ENCODE measurements at regions of chr5 and their contacts with region 1.

Region 1: DNA sequence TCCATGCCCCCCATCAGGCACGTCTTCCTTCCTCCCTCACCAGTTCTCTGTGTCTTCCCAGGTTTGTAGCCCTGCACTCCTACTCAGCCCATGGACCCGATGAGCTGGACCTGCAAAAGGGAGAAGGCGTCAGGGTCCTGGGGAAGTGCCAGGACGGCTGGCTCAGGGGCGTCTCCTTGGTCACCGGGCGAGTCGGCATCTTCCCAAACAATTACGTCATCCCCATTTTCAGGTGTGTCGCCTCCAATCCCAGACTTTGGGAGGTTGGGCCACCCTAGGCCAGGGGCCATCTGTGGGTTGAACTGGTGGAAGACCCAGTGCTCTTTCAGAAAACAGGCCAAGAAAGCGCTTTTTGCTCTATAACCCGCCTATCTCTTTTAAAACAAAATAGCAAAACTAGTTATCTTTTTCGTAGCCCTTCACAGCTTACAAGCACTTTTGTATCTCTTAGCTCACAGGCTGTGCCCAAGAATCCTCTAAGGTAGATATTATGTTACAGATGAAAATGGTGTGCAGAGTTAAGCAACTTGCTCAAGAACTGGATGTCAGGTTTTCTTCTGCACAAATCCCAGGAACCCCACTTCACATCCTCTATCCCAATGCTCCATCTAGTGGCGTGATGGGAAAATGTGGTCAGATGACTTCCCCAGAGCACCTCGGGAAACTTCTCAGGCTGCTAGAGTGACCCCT is 56.2 kb downstream of the PLAC8L1 start:
- DNase-seq: peak in 4 of 6 donors; percentile 27 to 63 (median 42)
- ATAC-seq: peak; percentile 66 to 90 (median 83)
- H3K4me3 ChIP-seq: no peak overlapping the region
- H3K27ac ChIP-seq: no peak overlapping the region
- H3K4me1 ChIP-seq: no peaks in the 10 kb centered on the region
- H3K27me3 ChIP-seq: no peaks in the 10 kb centered on the region
- CTCF ChIP-seq: peak; percentile 27 to 51 (median 43)

Region 2: GRCh38 chr5:145903113-145903512 is 146.0 kb before region 1 on chr5:
- intact Hi-C with region 1: loop called in 1 of 3 experiments (anchors 10 kb)
- DNase-seq: no peak
- ATAC-seq: no peak
- H3K4me3 ChIP-seq: no peak overlapping the region
- H3K27ac ChIP-seq: no peak overlapping the region
- H3K4me1 ChIP-seq: no peaks in the 10 kb centered on the region
- H3K27me3 ChIP-seq: no peaks in the 10 kb centered on the region
- CTCF ChIP-seq: peak in 2 of 4 donors; percentile 14 to 20

Region 3: DNA sequence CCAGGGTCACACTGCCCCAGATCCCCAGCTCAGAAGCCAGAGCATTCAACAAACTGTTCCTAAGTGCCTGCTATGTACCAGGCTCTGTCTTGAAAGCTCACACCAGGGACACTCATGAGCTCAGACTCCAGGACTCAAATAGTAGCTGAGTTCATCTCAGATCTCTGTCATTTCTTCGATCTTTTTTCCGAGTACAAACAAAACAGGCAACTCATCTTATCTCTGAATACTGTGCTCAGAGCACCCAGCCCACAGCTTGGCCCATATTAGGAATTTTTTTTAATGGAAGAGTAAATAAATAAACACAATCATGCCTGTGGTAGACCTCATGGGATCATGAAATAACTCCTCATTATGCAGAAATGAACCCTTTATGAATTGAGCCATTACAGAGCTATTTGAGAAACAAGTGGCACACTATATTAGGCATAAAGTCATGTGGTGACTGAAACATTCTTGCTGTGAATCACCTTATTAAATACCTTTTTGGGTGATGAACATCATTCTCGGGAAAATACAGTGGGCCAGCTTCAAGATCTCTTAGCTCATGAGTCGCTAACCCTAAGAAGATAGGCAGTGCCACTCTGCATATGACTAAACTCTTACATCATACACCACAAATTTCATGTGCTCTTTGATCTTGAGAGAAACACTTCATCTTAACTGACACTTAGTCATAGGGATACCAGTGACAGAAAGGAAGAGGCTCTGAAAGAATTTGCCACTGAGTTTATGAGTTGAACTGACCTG is 102.9 kb before region 1 on chr5:
- intact Hi-C with region 1: no loop called
- DNase-seq: no peak
- ATAC-seq: peak in 3 of 4 donors; percentile 5 to 12 (median 12)
- H3K4me3 ChIP-seq: no peak overlapping the region
- H3K27ac ChIP-seq: peak overlapping the region in 2 of 4 donors; percentile 55
- H3K4me1 ChIP-seq: peaks cover 6 to 61% (median 34%) of the 10 kb centered on the region in 3 donors
- H3K27me3 ChIP-seq: no peaks in the 10 kb centered on the region
- CTCF ChIP-seq: no peak

Region 4: GRCh38 chr5:145981589-145982491 is 67.3 kb before region 1 on chr5:
- intact Hi-C with region 1: loop called in 1 of 3 experiments (anchors 10 kb)
- DNase-seq: peak in 3 of 6 donors; percentile 15 to 26 (median 24)
- ATAC-seq: peak in 3 of 4 donors; percentile 17 to 30 (median 24)
- H3K4me3 ChIP-seq: no peak overlapping the region
- H3K27ac ChIP-seq: peak overlapping the region in 2 of 4 donors; percentile 24 to 28
- H3K4me1 ChIP-seq: peaks cover 48 to 52% (median 48%) of the 10 kb centered on the region in 3 donors
- H3K27me3 ChIP-seq: no peaks in the 10 kb centered on the region
- CTCF ChIP-seq: no peak

Region 5: DNA sequence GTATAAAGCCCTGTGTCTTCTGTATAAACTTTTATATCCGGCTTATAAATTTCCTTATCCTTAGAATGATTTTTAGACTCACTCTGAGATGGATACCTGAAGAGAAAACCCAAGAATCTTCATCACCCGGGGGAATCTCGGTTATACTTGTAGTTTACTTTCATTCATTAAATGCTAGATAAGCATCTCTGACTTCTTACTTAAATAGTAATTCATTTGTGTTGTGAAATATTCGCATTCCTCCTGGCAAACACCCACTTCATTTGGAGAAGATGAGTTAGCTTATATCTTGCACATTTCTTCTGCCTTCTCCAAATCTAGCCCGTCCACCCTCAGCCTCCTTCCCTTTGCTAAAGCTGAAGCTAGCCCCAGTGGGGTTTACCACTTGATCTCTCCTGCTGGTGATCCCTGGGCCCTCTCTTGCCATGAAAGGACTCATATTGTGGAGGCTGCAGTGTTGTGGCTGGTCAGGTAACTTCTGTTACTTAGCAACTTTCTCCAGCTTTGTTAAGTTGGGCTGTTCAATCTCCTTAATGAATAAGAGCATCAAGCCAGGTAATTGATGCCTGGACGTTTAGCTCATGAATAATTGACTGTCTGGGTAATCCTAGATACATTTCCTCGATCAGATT is 278.2 kb after region 1 on chr5:
- intact Hi-C with region 1: no loop called
- DNase-seq: no peak
- ATAC-seq: no peak
- H3K4me3 ChIP-seq: no peak overlapping the region
- H3K27ac ChIP-seq: no peak overlapping the region
- H3K4me1 ChIP-seq: no peaks in the 10 kb centered on the region
- H3K27me3 ChIP-seq: no peaks in the 10 kb centered on the region
- CTCF ChIP-seq: no peak